WTC11 (cell line): ENCODE measurements at regions of chr7 and their contacts with region 1.

Region 1: GRCh38 chr7:18570890-18571478 is 75.4 kb downstream of the HDAC9 start:
- DNase-seq: no peak
- ATAC-seq: no peak
- H3K4me3 Mint-ChIP-seq: no peak overlapping the region
- H3K27ac Mint-ChIP-seq: no peak overlapping the region
- H3K4me1 Mint-ChIP-seq: peaks cover 20% of the 10 kb centered on the region
- H3K27me3 Mint-ChIP-seq: no peaks in the 10 kb centered on the region
- CTCF ChIP-seq: no peak

Region 2: GRCh38 chr7:18357691-18358090 is 213.3 kb before region 1 on chr7:
- CTCF ChIA-PET with region 1: interaction called, 46 read pairs
- POLR2A ChIA-PET with region 1: no interaction called
- DNase-seq: no peak
- ATAC-seq: peak; percentile 55
- H3K4me3 Mint-ChIP-seq: no peak overlapping the region
- H3K27ac Mint-ChIP-seq: no peak overlapping the region
- H3K4me1 Mint-ChIP-seq: peaks cover 18% of the 10 kb centered on the region
- H3K27me3 Mint-ChIP-seq: no peaks in the 10 kb centered on the region
- CTCF ChIP-seq: no peak; the same call in 1 of the 2 replicates

Region 3: DNA sequence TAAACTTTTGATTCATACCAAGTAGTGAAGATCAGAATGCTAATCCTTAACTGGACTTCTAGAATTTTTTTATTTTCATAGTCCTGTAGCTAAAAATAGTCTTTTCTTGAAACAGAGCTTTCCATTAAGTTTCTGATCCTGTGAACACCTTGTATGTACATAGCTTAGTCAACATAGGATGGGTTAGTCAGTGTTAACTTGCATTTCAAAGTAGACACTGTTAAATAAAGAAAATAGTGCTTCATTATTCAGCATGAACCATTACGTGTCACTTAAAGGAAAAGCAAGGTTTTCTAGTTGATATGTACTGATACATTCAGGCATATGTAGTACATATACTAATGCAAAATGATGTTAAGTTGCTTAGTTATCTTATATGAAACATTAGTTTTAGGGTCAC is 82.9 kb before region 1 on chr7:
- CTCF ChIA-PET with region 1: no interaction called
- POLR2A ChIA-PET with region 1: no interaction called
- DNase-seq: no peak
- ATAC-seq: no peak
- H3K4me3 Mint-ChIP-seq: no peak overlapping the region
- H3K27ac Mint-ChIP-seq: no peak overlapping the region
- H3K4me1 Mint-ChIP-seq: peaks cover 12% of the 10 kb centered on the region
- H3K27me3 Mint-ChIP-seq: no peaks in the 10 kb centered on the region
- CTCF ChIP-seq: no peak

Region 4: DNA sequence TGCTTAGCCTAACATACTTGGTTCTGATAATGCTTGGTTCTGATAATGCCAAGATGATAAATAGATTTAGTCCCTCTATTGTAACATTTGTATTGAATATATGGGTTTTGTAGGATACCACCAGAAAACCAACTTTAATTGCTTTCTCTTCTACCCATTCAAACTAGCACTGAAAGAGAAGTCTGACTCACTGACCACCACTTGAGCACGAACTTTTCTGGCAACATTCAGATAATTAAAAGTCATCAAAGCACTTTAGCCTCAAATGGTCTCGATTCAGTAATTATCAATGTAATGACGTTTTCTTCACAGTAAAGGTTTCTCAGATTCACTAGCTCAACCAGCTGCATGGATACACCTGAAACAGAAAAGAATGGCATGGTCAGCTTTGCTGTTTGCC is 12.5 kb before region 1 on chr7:
- CTCF ChIA-PET with region 1: no interaction called
- POLR2A ChIA-PET with region 1: no interaction called
- DNase-seq: no peak
- ATAC-seq: no peak
- H3K4me3 Mint-ChIP-seq: no peak overlapping the region
- H3K27ac Mint-ChIP-seq: no peak overlapping the region
- H3K4me1 Mint-ChIP-seq: no peaks in the 10 kb centered on the region
- H3K27me3 Mint-ChIP-seq: no peaks in the 10 kb centered on the region
- CTCF ChIP-seq: no peak

Region 5: DNA sequence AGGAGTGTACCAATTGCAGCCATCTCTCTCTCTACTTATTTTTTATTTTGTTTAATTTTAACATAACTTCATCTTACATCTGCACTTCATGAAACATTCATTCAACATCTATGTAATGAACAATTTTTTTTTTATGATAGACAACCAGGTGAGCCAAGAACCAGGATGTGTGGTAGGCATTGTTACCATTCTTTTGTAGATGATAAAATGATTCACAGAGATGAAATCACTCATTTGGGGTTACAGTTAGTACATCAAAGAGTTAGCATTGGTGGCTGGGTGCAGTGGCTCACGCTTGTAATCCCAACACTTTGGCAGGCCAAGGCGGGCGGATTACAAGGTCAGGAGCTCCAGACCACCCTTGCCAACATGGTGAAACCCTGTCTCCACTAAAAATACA is 52.4 kb after region 1 on chr7:
- CTCF ChIA-PET with region 1: no interaction called
- POLR2A ChIA-PET with region 1: no interaction called
- DNase-seq: no peak
- ATAC-seq: no peak
- H3K4me3 Mint-ChIP-seq: no peak overlapping the region
- H3K27ac Mint-ChIP-seq: no peak overlapping the region
- H3K4me1 Mint-ChIP-seq: peaks cover 5% of the 10 kb centered on the region
- H3K27me3 Mint-ChIP-seq: no peaks in the 10 kb centered on the region
- CTCF ChIP-seq: no peak